Cardiac septum (tissue), 1 donor: ENCODE measurements at regions of chr10 and their contacts with region 1.

Region 1: DNA sequence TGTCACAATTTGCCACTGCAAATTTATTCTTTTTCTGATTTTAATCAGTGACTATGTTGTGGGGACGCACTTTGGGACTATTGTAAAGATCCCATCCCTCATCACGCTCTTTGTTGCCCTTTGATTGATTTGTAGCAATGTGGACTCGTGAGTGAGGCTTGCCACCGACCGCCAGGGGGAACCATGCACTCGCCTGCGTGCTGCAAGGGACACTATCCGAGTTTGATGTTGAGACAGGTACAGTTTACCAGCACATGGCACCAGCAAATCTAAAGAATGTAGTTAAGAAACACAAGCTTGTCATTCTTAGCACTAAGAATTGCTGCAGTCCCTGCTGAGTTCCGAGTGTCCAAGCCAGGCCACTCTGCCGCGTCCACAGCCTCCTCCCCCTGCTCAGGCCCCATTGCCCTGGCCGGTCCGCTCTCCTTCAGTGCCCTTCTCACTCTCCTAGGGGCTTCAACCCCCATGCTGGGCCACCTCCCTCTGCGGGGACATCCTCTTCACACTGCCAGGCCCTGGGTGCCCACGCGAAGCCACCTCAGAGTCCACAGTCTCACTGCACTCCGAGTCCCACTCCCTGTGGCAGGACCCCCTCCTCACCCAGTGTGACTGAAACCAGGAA is 2.0 kb upstream of the SFTPA2 start:
- DNase-seq: no peak

Region 2: GRCh38 chr10:79374312-79375191 is 187.7 kb before region 1 on chr10:
- intact Hi-C with region 1: no loop called
- DNase-seq: peak; percentile 91

Region 3: GRCh38 chr10:79445141-79445976 is 116.9 kb before region 1 on chr10 and contains the start of gene ZCCHC24:
- intact Hi-C with region 1: no loop called
- DNase-seq: peak; percentile 98
- total RNA-seq, gene ZCCHC24: 56.6 TPM

Region 4: DNA sequence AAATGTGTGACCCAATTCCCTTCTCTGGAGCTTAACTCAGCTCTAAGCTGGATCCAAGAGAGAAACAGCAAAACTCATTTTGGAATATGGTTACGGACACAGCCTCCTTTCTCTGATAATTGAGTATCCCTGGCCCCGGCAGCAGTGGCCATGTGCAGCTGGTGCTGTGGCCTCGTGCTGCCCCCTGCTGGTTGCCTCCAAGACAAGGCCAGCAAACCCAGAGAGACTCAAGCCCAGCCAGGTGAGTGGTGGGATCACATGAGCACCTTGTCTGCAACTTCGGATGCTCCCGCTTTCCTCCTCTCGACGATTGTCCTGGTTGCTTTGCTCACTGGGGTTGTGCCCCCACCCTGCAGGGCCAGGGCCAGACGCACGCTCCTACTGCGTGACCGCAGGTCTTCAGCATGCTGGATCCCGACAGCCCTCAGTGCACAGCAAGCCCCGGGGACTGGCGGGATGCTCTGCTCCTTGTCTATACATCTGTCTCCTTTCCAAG is 367.2 kb after region 1 on chr10:
- intact Hi-C with region 1: loop called (anchors 5 kb)
- DNase-seq: peak; percentile 91